Heart left ventricle (tissue), 16 donors: ENCODE measurements at regions of chr2 and their contacts with region 1.

Region 1: DNA sequence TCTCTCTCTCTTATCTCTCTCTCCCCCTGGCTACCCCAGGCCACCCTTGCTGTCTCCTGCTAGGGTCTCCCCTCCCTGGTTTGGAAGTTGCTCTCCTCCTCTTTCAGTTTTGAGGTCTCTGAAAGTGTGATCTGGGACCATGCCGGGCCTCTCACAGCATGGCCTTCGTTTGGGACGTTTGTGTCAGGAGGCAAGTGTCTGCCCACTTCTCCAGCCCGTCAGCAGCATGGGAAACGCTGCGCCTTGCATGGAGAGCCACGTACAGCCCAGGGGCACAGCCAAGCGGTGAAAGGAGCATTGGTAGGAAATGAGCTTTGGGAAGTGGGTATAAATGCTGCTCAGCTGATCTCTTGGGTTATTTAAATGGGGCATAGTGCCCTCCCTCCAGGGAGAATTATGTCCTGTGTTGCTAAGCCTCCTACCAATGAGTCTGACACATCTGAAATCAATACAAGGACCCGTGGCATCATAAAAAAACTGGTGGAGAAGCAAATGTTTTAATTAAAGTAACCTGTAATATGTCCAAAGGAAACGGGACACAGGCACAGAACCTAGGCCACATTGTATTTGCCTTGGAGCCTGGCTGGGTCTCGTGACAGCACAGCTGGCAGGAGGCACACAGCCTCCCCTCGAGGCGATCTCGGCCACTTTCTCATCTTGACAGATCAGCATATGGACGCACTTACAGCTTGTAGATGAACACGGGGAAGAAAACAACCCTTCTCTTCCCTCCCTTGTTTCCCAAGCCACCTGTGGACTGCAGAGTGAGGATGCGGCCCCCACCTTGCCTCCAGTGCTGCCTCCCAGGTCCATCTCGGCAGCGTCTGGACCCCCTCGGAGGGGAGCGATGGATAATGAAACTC is 72.7 kb downstream of the SH3RF3 start:
- DNase-seq: peak in 2 of 5 donors; percentile 71
- ATAC-seq: peak; percentile 47 to 79 (median 70)
- H3K4me3 ChIP-seq: no peak overlapping the region
- H3K27ac ChIP-seq: peak overlapping the region in 10 of 12 donors; percentile 44 to 72 (median 56)
- H3K4me1 ChIP-seq: peaks cover 0 to 44% (median 19%) of the 10 kb centered on the region in 12 donors
- H3K27me3 ChIP-seq: no peaks in the 10 kb centered on the region
- CTCF ChIP-seq: peak in 6 of 12 donors; percentile 10 to 32 (median 16)
- POLR2A ChIP-seq: no peak

Region 2: GRCh38 chr2:109143214-109144187 is 58.2 kb before region 1 on chr2:
- intact Hi-C with region 1: loop called in 2 of 10 experiments (anchors 5 to 10 kb)
- DNase-seq: no peak
- ATAC-seq: no peak
- H3K4me3 ChIP-seq: no peak overlapping the region
- H3K27ac ChIP-seq: no peak overlapping the region
- H3K4me1 ChIP-seq: peaks cover 0 to 4% (median 0%) of the 10 kb centered on the region in 12 donors
- H3K27me3 ChIP-seq: no peaks in the 10 kb centered on the region
- CTCF ChIP-seq: no peak
- POLR2A ChIP-seq: no peak